Posterior vena cava (tissue), 2 donors: ENCODE measurements at regions of chr4 and their contacts with region 1.

Region 1: DNA sequence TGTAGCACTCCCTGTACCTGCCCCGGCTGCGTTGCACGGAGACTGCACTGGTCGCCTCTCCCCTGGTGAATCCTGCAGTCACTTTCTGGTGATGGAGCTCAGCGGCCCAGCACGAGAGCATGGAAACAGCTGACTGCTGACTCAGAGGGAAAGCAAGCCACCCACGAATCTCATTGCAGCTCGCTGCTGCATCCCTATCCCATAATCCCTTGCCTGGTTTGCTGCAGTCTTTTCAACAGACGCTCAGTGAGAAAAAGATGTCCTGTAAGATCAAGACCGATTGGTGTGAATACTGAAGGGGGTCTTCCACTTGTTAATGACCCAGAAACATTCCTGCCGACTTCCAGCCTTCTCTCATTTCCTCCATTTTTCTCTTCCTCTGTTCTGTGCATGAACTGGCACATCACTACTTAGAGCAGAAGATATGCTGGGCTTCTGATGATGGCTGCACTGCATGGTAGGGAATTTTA is 52.9 kb downstream of the TRIM2 start:
- DNase-seq: peak; percentile 81

Region 2: DNA sequence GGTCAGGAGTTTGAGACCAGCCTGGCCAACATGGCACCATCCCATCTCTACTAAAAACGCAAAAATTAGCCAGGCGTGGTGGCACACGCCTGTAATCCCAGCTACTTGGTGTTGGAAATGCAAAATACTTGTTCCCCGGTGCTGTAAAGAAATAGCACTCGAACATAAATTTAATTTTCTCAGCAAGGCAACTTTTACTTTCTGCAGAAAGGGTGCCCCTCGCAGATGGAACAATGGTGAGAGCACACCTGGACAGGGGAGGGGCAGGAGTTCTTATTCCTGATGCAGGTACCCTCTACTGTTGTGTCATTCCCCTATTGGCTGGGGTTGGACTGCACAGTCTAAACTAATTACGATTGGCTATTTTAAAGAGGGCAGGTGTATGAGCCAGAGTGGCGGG is 1708.5 kb before region 1 on chr4:
- intact Hi-C with region 1: no loop called
- DNase-seq: no peak

Region 3: DNA sequence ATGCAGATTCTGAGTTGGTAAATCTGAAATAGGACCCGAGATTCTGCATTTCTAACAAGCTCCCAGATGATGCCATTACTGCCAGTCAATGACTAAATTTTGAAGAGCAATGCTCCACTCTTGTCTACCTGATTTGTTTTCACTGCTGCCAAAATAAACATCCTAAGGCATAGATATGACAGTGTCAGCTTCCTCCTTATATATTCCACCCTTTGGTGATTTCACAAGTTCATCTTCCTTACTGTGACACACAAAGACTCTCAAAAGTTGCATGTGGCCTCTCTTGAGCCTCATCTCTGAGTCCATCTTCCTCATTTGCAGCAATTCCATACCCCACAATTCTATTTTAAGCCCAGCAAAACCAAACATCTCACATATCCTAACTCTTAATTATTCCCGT is 832.2 kb before region 1 on chr4:
- intact Hi-C with region 1: loop called in 1 of 2 experiments (anchors 5 kb)
- DNase-seq: no peak

Region 4: GRCh38 chr4:153233761-153234371 is 23.3 kb before region 1 on chr4:
- intact Hi-C with region 1: loop called in 1 of 2 experiments (anchors 1 kb)
- DNase-seq: no peak